Mammary epithelial cell (primary cell): ENCODE measurements at regions of chr20 and their contacts with region 1.

Region 1: GRCh38 chr20:3000852-3001523 is 42.4 kb upstream of the GNRH2 start:
- DNase-seq: peak; percentile 20
- H3K4me3 ChIP-seq: no peak overlapping the region
- H3K27ac ChIP-seq: no peak overlapping the region
- H3K4me1 ChIP-seq: no peaks in the 10 kb centered on the region
- H3K27me3 ChIP-seq: no peaks in the 10 kb centered on the region
- CTCF ChIP-seq: peak; percentile 52 to 60

Region 2: GRCh38 chr20:2713285-2713684 is 287.7 kb before region 1 on chr20:
- CTCF ChIA-PET with region 1: interaction called, 3 read pairs
- dilution Hi-C with region 1: no loop called
- in situ Hi-C with region 1: loop called in 1 of 2 experiments (anchors 25 kb)
- intact Hi-C with region 1: loop called (anchors 1 kb)
- DNase-seq: no peak
- H3K4me3 ChIP-seq: no peak overlapping the region
- H3K27ac ChIP-seq: no peak overlapping the region
- H3K4me1 ChIP-seq: no peaks in the 10 kb centered on the region
- H3K27me3 ChIP-seq: peaks cover 11% of the 10 kb centered on the region
- CTCF ChIP-seq: peak; percentile 7 to 49

Region 3: DNA sequence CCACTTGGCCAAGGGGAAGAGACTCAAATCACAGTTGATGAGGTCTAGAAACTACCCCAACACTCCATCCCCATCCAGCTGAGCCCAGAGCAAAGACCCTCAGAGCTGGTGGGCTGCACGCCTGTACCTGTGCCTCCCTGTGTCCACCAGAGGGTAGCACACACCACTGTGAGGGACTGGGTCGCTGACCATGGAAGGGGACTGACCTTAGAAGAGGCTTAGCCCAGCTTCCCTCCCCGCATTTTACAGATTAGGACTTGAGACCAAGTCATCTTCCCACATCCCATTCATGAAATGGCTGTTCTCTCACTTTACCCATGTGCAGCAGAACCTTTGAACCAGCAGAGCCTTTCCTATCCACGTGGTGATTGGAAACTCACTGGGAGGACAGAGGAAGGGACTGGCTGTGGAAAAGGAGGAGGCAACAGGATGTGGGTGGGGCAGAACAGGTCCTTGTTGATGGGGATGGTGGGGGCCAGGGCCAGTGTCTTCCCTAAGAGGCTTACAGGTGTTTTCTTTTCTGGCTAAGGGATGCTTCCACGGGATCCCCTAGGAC is 244.9 kb before region 1 on chr20:
- CTCF ChIA-PET with region 1: no interaction called
- dilution Hi-C with region 1: no loop called
- in situ Hi-C with region 1: no loop called
- intact Hi-C with region 1: loop called (anchors 1 kb)
- DNase-seq: no peak
- H3K4me3 ChIP-seq: no peak overlapping the region
- H3K27ac ChIP-seq: no peak overlapping the region
- H3K4me1 ChIP-seq: peaks cover 10% of the 10 kb centered on the region
- H3K27me3 ChIP-seq: peaks cover 20% of the 10 kb centered on the region
- CTCF ChIP-seq: peak; percentile 42 to 64

Region 4: DNA sequence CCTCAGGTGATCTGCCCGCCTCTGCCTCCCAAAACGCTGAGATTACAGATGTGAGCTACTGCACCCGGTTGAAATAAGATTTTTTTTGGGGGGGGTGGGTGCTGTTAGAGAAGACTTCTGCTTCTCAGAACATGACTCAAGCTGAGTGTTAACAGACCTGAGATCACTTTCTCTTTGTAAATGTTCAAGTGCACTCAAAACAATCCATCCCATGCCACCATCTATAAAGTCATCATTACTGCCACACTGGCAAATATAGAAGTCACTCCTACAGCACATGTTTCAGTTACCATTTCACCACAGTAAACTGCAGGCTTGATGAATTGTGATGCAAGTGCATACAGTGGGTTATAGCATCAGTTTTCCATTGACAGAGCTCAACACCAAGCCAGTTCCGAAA is 151.5 kb before region 1 on chr20:
- CTCF ChIA-PET with region 1: no interaction called
- dilution Hi-C with region 1: no loop called
- in situ Hi-C with region 1: no loop called
- intact Hi-C with region 1: loop called (anchors 5 kb)
- DNase-seq: no peak
- H3K4me3 ChIP-seq: no peak overlapping the region
- H3K27ac ChIP-seq: no peak overlapping the region
- H3K4me1 ChIP-seq: no peaks in the 10 kb centered on the region
- H3K27me3 ChIP-seq: no peaks in the 10 kb centered on the region
- CTCF ChIP-seq: no peak

Region 5: GRCh38 chr20:2873010-2873746 is 127.8 kb before region 1 on chr20 and contains the start of gene PTPRA:
- CTCF ChIA-PET with region 1: no interaction called
- dilution Hi-C with region 1: no loop called
- in situ Hi-C with region 1: no loop called
- intact Hi-C with region 1: loop called (anchors 1 kb)
- DNase-seq: peak; percentile 86
- H3K4me3 ChIP-seq: peak within 1 kb of the TSS; percentile 83 to 99 (median 96)
- H3K27ac ChIP-seq: peak within 1 kb of the TSS; percentile 52
- H3K4me1 ChIP-seq: peaks cover 20% of the 10 kb centered on the region
- H3K27me3 ChIP-seq: no peaks in the 10 kb centered on the region
- CTCF ChIP-seq: no peak
- total RNA-seq, gene PTPRA: 37.5 to 39.2 TPM

Region 6: GRCh38 chr20:2914160-2914559 is 86.8 kb before region 1 on chr20:
- CTCF ChIA-PET with region 1: interaction called, 5 read pairs
- dilution Hi-C with region 1: no loop called
- in situ Hi-C with region 1: no loop called
- intact Hi-C with region 1: loop called (anchors 1 kb)
- DNase-seq: peak; percentile 18
- H3K4me3 ChIP-seq: no peak overlapping the region
- H3K27ac ChIP-seq: no peak overlapping the region
- H3K4me1 ChIP-seq: no peaks in the 10 kb centered on the region
- H3K27me3 ChIP-seq: no peaks in the 10 kb centered on the region
- CTCF ChIP-seq: peak in 1 of 2 donors; percentile 44